Activated CD4-positive, alpha-beta memory T cell treated with anti-CD3 and anti-CD28 coated beads, Interleukin-2, amount 10 ng/mL, durations not matched to agents 7 days and 5 days (primary cell): ENCODE measurements at regions of chr2 and their contacts with region 1.

Region 1: GRCh38 chr2:241315093-241315878 is at the start of gene HDLBP:
- DNase-seq: peak; percentile 100
- H3K4me3 Mint-ChIP-seq: peak within 1 kb of the TSS; percentile 100
- H3K27ac Mint-ChIP-seq: peak within 1 kb of the TSS; percentile 100
- H3K4me1 Mint-ChIP-seq: peaks cover 69% of the 10 kb centered on the region
- H3K27me3 Mint-ChIP-seq: no peaks in the 10 kb centered on the region
- total RNA-seq, gene HDLBP: 190 to 193 TPM

Region 2: DNA sequence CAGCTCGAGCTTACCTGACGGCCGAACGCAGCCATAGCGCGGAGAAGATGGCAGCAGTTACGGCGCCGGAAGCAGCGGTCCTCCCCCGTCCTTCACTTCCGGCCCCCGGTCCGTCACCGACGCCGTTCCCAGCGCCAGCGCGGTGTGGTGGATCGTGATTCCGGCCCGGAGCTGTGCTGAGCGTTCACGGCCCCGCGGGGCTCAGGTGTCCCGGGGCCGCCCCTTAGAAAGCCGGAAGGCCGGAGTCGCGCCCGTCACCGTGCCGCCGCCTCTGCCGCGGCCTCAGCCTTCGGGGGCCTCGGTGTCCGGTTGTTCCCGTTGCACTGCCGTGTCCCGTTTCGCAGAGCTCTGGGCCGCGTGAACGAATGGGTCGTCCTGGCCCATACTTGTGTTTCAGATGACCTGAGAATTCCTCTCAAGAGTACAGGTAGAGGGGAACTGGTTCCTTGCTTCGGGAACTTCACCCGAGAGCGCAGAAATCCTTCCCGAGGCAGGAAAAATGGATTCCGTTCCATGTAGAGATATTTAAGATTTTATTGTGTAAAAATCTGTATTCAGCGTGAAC is 213.0 kb before region 1 on chr2 and contains the start of gene MTERF4:
- CTCF ChIA-PET with region 1: no interaction called
- POLR2A ChIA-PET with region 1: interaction called, 14 read pairs
- DNase-seq: peak; percentile 89
- H3K4me3 Mint-ChIP-seq: peak within 1 kb of the TSS; percentile 97
- H3K27ac Mint-ChIP-seq: peak within 1 kb of the TSS; percentile 94
- H3K4me1 Mint-ChIP-seq: peaks cover 53% of the 10 kb centered on the region
- H3K27me3 Mint-ChIP-seq: no peaks in the 10 kb centered on the region
- total RNA-seq, gene MTERF4: 41.5 to 45.4 TPM

Region 3: GRCh38 chr2:241224018-241224850 is 91.1 kb before region 1 on chr2:
- CTCF ChIA-PET with region 1: no interaction called
- POLR2A ChIA-PET with region 1: no interaction called
- DNase-seq: no peak
- H3K4me3 Mint-ChIP-seq: no peak overlapping the region
- H3K27ac Mint-ChIP-seq: no peak overlapping the region
- H3K4me1 Mint-ChIP-seq: peaks cover 4% of the 10 kb centered on the region
- H3K27me3 Mint-ChIP-seq: peaks cover 7% of the 10 kb centered on the region

Region 4: DNA sequence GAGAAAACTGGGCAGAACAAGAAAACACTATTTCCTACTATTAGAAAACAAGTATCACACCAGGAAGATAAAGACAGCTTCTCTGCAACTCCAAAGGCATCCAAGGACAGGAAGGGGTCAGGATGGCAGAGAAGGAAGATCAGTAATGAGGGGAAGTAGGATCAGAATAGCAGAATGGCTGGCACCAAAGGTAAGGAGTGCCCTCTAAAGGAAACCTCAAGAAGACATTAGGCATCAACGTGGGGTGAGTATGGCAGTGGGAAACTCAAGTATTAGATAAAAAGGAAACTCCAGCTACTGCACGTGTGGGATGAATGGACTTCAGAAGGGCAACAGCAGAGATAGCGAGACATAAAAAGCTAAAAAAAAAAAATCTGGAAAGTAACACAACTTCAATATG is 25.7 kb before region 1 on chr2:
- CTCF ChIA-PET with region 1: interaction called, 3 read pairs
- POLR2A ChIA-PET with region 1: interaction called, 18 read pairs
- DNase-seq: no peak
- H3K4me3 Mint-ChIP-seq: no peak overlapping the region
- H3K27ac Mint-ChIP-seq: no peak overlapping the region
- H3K4me1 Mint-ChIP-seq: peaks cover 26% of the 10 kb centered on the region
- H3K27me3 Mint-ChIP-seq: no peaks in the 10 kb centered on the region

Region 5: DNA sequence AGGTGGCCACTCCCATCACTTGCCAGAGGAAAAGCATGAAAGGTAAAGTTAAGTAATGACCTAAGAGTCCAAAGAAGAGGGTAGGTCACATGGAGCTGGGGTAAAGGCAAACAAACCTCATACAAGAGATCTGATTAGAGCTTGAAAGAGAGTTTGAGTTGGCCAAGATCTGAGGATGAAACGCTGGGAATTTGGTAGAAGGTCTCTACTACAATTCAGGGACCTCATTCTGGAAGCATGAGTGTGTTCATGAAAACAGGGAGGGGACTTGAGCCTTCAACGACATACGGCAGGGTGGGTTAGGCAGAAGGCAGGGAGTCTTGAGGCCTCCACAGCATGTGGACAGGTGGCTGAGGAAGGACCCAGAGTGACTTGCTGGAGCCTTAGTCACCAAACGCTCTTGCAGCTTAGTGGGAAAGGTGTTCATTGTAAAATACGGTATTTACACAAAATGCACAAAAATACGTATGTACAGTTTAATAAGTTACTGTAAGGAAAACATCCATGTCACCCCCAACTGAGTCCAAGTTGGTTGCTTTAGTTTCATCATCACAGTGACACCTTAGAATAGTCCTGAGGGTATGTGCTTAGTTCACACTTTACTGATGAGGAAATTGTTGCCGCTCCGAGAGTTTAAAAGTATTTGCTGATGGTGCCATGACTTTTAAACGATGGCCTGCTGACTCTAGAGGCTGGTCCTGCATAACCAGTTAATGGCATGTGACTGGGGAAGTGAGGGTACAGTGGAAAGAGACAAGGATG is 35.8 kb after region 1 on chr2:
- CTCF ChIA-PET with region 1: no interaction called
- POLR2A ChIA-PET with region 1: interaction called, 17 read pairs
- DNase-seq: no peak
- H3K4me3 Mint-ChIP-seq: no peak overlapping the region
- H3K27ac Mint-ChIP-seq: peak overlapping the region; percentile 2
- H3K4me1 Mint-ChIP-seq: peaks cover 13% of the 10 kb centered on the region
- H3K27me3 Mint-ChIP-seq: no peaks in the 10 kb centered on the region

Region 6: GRCh38 chr2:241686649-241687425 is 371.6 kb after region 1 on chr2 and contains the start of gene DTYMK:
- CTCF ChIA-PET with region 1: no interaction called
- POLR2A ChIA-PET with region 1: interaction called, 19 read pairs
- DNase-seq: peak; percentile 97
- H3K4me3 Mint-ChIP-seq: peak within 1 kb of the TSS; percentile 82
- H3K27ac Mint-ChIP-seq: peak within 1 kb of the TSS; percentile 90
- H3K4me1 Mint-ChIP-seq: peaks cover 40% of the 10 kb centered on the region
- H3K27me3 Mint-ChIP-seq: no peaks in the 10 kb centered on the region
- total RNA-seq, gene DTYMK: 54.8 to 57.7 TPM